ENCODE measurements at regions of chr5 and their contacts with region 1.

Region 1: GRCh38 chr5:123610665-123611405 is 98.9 kb downstream of the CSNK1G3 start:
- DNase-seq: peak; percentile 38
- H3K4me3 Mint-ChIP-seq: no peak overlapping the region
- H3K27ac Mint-ChIP-seq: no peak overlapping the region
- H3K4me1 Mint-ChIP-seq: no peaks in the 10 kb centered on the region
- H3K27me3 Mint-ChIP-seq: no peaks in the 10 kb centered on the region

Region 2: GRCh38 chr5:122896598-122897282 is 714.1 kb before region 1 on chr5:
- CTCF ChIA-PET with region 1: no interaction called
- intact Hi-C with region 1: loop called (anchors 10 kb)
- DNase-seq: no peak
- H3K4me3 Mint-ChIP-seq: no peak overlapping the region
- H3K27ac Mint-ChIP-seq: no peak overlapping the region
- H3K4me1 Mint-ChIP-seq: no peaks in the 10 kb centered on the region
- H3K27me3 Mint-ChIP-seq: no peaks in the 10 kb centered on the region

Region 3: GRCh38 chr5:123180178-123180577 is 430.7 kb before region 1 on chr5:
- CTCF ChIA-PET with region 1: no interaction called
- intact Hi-C with region 1: loop called (anchors 10 kb)
- DNase-seq: no peak
- H3K4me3 Mint-ChIP-seq: no peak overlapping the region
- H3K27ac Mint-ChIP-seq: no peak overlapping the region
- H3K4me1 Mint-ChIP-seq: no peaks in the 10 kb centered on the region
- H3K27me3 Mint-ChIP-seq: peaks cover 8% of the 10 kb centered on the region

Region 4: DNA sequence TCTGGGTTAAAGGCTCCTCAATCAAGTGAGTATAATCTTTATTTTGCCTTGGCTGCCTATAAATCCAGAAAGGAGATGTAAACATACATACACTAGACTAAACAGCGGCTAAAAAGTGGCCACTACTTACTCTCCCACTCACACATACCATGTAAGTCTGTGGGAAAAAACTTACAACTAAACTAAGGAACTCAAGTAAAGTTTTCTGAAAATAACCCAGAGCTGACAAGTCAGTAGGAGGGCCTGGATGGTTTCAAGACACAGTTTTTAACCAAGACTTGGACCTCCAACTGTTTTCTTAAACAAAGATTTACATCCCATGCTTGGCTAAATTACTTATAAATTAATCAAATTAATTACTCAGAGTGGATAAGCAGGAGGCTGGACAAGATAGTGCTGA is 252.1 kb before region 1 on chr5:
- CTCF ChIA-PET with region 1: no interaction called
- intact Hi-C with region 1: no loop called
- DNase-seq: no peak
- H3K4me3 Mint-ChIP-seq: no peak overlapping the region
- H3K27ac Mint-ChIP-seq: no peak overlapping the region
- H3K4me1 Mint-ChIP-seq: no peaks in the 10 kb centered on the region
- H3K27me3 Mint-ChIP-seq: no peaks in the 10 kb centered on the region

Region 5: DNA sequence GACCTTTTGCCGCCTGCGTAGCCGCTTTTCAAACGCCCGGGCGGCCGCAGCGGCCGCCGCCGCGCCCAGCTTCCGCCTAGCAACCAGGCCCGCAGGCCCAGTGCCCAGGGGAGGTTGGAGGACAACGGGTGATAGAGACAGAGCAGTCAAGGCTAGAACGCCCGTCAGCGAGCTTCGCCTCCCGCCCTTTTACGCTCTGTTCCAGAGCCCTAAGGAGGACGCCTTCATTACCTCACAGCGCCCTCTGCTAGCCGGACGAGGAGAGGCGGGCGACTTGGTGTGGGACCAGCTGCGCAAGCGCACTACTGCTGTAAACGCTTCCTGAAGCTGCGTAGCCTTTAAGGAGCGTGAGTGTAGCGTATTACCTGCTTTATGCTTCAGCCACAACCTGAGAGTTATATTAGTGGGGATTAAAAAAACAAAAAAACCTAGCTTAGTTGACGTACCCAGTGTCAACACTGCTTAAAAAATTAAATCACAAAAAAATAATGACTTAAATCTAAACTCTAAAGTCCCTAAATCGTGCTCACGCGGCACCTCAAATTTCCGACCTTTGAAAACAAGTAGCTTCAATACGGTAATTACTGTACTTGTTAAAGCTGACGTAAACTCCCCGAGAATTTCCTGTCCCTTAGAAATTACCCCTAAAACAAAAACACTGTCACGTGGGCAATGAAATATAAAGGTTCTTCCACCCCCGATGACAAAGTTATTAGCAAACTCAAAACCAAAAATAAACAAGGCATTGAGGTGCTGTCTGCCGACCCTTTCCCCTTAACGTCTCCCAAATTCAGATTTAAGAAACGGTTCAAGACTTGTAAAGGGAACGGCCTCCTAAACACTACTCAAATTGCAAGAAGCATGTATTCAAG is 187.3 kb before region 1 on chr5 and contains the start of gene CEP120:
- CTCF ChIA-PET with region 1: interaction called, 12 read pairs
- intact Hi-C with region 1: loop called (anchors 1 kb)
- DNase-seq: peak; percentile 98
- H3K4me3 Mint-ChIP-seq: no peak within 1 kb of the TSS
- H3K27ac Mint-ChIP-seq: no peak within 1 kb of the TSS
- H3K4me1 Mint-ChIP-seq: peaks cover 21% of the 10 kb centered on the region
- H3K27me3 Mint-ChIP-seq: no peaks in the 10 kb centered on the region
- total RNA-seq, gene CEP120: 39.2 to 39.5 TPM

Region 6: GRCh38 chr5:123511648-123512605 is 98.9 kb before region 1 on chr5 and contains the start of gene CSNK1G3:
- CTCF ChIA-PET with region 1: no interaction called
- intact Hi-C with region 1: loop called (anchors 1 kb)
- DNase-seq: peak; percentile 98
- H3K4me3 Mint-ChIP-seq: peak within 1 kb of the TSS; percentile 97
- H3K27ac Mint-ChIP-seq: peak within 1 kb of the TSS; percentile 97
- H3K4me1 Mint-ChIP-seq: peaks cover 40% of the 10 kb centered on the region
- H3K27me3 Mint-ChIP-seq: peaks cover 5% of the 10 kb centered on the region
- total RNA-seq, gene CSNK1G3: 31.9 to 33.8 TPM

Region 7: DNA sequence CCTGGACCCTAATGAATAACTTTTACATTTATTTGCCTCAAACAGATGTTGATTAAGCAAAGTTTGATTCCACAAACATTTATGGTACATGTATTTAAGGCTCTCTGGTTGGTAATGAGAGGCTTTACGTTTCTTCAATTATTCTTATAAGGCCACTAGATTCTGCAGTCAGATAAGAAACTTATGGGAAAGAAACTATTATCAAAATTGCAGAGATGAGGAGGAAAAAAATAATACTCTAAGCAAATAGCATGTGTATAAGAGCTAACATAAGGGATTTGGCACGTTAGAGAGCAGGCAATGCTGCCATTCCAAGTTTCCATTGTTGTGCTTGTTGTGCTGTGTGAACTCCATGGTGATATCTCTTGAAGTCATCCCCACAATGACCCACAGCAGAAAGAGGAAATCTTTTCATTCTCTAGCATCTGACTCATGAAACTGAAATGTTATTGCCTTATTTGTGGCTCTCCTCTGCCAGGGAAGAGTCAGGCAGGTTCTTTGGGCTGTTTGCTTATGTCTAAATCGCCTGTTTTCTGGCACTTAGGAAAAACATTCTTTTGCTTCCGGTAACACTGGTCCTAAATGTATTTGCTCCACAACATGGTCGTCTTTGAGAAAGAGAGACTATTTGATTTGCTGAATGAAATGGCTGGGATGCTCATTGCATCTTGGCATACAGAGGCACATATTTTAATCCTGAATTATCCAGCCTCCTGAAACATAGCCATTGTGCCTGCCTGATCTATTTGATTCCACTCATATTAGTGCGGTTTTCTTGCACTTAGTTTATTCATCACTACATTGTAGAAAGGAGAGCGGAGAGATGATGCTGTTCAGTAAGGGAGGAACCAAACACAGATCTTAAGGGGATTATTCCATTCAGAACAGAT is 89.8 kb after region 1 on chr5:
- CTCF ChIA-PET with region 1: no interaction called
- intact Hi-C with region 1: no loop called
- DNase-seq: no peak
- H3K4me3 Mint-ChIP-seq: no peak overlapping the region
- H3K27ac Mint-ChIP-seq: no peak overlapping the region
- H3K4me1 Mint-ChIP-seq: no peaks in the 10 kb centered on the region
- H3K27me3 Mint-ChIP-seq: no peaks in the 10 kb centered on the region

Region 8: DNA sequence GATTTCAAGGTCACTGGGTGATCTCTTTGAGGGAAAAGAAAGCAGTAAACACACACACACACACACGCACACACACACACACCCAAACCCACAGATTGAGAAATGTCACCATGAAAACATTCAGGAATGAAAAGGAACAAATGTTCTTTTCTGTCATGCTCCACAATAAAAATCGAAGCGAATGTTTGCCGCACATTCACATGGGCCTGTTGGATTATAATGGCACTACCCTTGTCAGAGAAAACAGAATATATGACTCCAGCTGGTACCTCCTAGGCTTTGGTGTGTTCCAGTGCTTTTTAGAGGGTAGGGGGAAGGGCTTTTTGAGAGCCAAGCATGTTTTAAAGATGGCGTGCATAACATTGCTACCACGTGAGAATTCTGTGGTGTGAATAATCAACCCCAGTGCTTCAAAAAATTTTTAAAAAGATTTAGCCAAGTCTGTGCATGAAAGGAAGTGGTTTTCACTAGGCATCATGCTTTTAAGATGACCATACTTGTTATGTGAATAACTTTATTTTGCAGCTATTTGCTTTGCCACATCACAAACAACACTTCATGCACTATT is 1256.4 kb after region 1 on chr5:
- CTCF ChIA-PET with region 1: no interaction called
- intact Hi-C with region 1: no loop called
- DNase-seq: no peak
- H3K4me3 Mint-ChIP-seq: no peak overlapping the region
- H3K27ac Mint-ChIP-seq: no peak overlapping the region
- H3K4me1 Mint-ChIP-seq: peaks cover 2% of the 10 kb centered on the region
- H3K27me3 Mint-ChIP-seq: peaks cover 3% of the 10 kb centered on the region